HEK293 (cell line): ENCODE measurements at regions of chr3 and their contacts with region 1.

Region 1: GRCh38 chr3:39000008-39000450 is 51.7 kb downstream of the SCN11A start:
- H3K4me3 ChIP-seq: no peak overlapping the region
- H3K27ac ChIP-seq: no peak overlapping the region
- H3K4me1 ChIP-seq: no peaks in the 10 kb centered on the region
- CTCF ChIP-seq: peak; percentile 52; the same call in 1 of the 2 replicates

Region 2: GRCh38 chr3:38843898-38844297 is 156.1 kb before region 1 on chr3:
- CTCF ChIA-PET with region 1: interaction called, 10 read pairs
- POLR2A ChIA-PET with region 1: no interaction called
- H3K4me3 ChIP-seq: no peak overlapping the region
- H3K27ac ChIP-seq: no peak overlapping the region
- H3K4me1 ChIP-seq: no peaks in the 10 kb centered on the region
- CTCF ChIP-seq: no peak; the same call in 1 of the 2 replicates

Region 3: DNA sequence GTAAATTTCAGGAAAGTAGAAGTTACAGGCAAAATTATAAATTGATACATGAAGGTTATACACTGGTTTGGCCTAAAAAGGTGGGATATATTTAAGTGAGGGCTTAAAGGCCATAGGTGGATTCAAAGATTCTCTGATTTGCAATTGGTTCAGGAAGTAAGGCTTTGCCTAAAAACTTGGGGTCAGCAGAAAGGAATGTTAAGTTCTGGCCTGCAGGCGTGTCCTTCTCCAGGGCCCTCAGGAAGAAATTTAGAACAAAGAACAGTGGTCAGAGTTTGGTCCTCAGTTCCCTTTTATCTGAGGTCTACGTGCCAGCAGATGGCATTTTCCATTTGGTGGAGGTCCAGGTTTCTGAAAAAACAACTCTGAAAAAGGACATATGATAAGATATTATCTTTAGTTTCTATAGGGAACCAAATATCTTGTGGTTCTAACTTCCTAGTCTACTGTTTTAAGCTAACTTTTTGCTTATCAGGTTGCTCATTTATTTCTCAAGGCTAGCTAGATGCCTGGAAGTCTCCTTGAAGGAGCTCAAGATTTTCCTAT is 11.2 kb after region 1 on chr3:
- CTCF ChIA-PET with region 1: interaction called, 15 read pairs
- POLR2A ChIA-PET with region 1: no interaction called
- H3K4me3 ChIP-seq: no peak overlapping the region
- H3K27ac ChIP-seq: no peak overlapping the region
- H3K4me1 ChIP-seq: no peaks in the 10 kb centered on the region
- CTCF ChIP-seq: no peak

Region 4: DNA sequence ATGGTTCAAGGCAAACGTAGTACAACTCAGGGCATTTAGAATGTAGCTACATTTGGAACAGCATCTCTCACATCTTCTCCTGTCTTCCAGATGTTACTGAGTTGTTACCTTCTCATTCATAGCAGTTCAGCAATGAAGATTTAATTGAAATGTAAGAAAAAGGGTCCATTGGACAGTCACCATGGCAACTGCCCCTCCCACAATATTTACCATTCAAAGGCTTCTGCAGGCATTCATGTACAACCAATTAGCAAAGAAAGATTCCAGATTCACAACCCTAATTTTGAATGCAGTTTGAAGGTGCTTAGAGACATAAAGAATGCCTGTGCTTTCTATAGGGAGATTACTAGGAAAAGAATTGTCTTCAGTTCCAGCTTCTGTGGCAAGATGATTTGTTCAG is 29.5 kb after region 1 on chr3:
- CTCF ChIA-PET with region 1: interaction called, 13 read pairs
- POLR2A ChIA-PET with region 1: no interaction called
- H3K4me3 ChIP-seq: no peak overlapping the region
- H3K27ac ChIP-seq: no peak overlapping the region
- H3K4me1 ChIP-seq: no peaks in the 10 kb centered on the region
- CTCF ChIP-seq: no peak